ENCODE measurements at regions of chr9 and their contacts with region 1.

Region 1: GRCh38 chr9:100714372-100715099 is 136.7 kb downstream of the CAVIN4 start:
- DNase-seq: peak in 1 of 2 donors; percentile 41
- ATAC-seq: no peak
- H3K4me3 ChIP-seq: no peak overlapping the region
- H3K4me3 Mint-ChIP-seq: no peak overlapping the region
- H3K27ac ChIP-seq: no peak overlapping the region
- H3K27ac Mint-ChIP-seq: no peak overlapping the region
- H3K4me1 ChIP-seq: no peaks in the 10 kb centered on the region
- H3K4me1 Mint-ChIP-seq: no peaks in the 10 kb centered on the region
- H3K27me3 ChIP-seq: no peaks in the 10 kb centered on the region
- H3K27me3 Mint-ChIP-seq: no peaks in the 10 kb centered on the region
- CTCF ChIP-seq: peak; percentile 50

Region 2: DNA sequence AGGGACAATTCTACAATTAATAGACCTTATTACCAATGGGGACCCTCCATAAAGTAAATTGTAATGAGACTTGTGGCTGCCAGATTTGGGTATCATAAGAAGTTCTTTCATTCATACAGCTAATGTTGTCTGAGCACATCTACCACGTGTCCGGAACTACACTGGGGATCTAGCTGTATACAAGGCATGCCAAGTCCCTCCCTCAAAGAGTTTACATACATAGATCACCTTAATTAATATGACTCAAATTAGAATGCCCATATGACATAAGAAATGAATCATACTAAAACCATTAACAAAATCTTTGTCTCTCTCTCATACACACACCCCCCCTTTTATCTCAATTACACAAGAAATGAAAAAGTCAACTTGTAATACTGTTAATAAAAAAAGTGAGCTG is 910.8 kb before region 1 on chr9:
- intact Hi-C with region 1: no loop called
- DNase-seq: no peak
- ATAC-seq: no peak
- H3K4me3 ChIP-seq: no peak overlapping the region
- H3K4me3 Mint-ChIP-seq: no peak overlapping the region
- H3K27ac ChIP-seq: no peak overlapping the region
- H3K27ac Mint-ChIP-seq: no peak overlapping the region
- H3K4me1 ChIP-seq: no peaks in the 10 kb centered on the region
- H3K4me1 Mint-ChIP-seq: peaks cover 3 to 6% of the 10 kb centered on the region in 2 donors
- H3K27me3 ChIP-seq: no peaks in the 10 kb centered on the region
- H3K27me3 Mint-ChIP-seq: no peaks in the 10 kb centered on the region
- CTCF ChIP-seq: no peak

Region 3: GRCh38 chr9:101311758-101312420 is 597.4 kb after region 1 on chr9:
- intact Hi-C with region 1: loop called (anchors 5 kb)
- DNase-seq: peak in 1 of 2 donors; percentile 79
- ATAC-seq: peak; percentile 49 to 72 (median 55)
- H3K4me3 ChIP-seq: no peak overlapping the region
- H3K4me3 Mint-ChIP-seq: no peak overlapping the region
- H3K27ac ChIP-seq: no peak overlapping the region
- H3K27ac Mint-ChIP-seq: no peak overlapping the region
- H3K4me1 ChIP-seq: no peaks in the 10 kb centered on the region
- H3K4me1 Mint-ChIP-seq: no peaks in the 10 kb centered on the region
- H3K27me3 ChIP-seq: no peaks in the 10 kb centered on the region
- H3K27me3 Mint-ChIP-seq: peaks cover 3 to 7% of the 10 kb centered on the region in 2 donors
- CTCF ChIP-seq: peak; percentile 75